ENCODE measurements at regions of chr10 and their contacts with region 1.

Region 1: DNA sequence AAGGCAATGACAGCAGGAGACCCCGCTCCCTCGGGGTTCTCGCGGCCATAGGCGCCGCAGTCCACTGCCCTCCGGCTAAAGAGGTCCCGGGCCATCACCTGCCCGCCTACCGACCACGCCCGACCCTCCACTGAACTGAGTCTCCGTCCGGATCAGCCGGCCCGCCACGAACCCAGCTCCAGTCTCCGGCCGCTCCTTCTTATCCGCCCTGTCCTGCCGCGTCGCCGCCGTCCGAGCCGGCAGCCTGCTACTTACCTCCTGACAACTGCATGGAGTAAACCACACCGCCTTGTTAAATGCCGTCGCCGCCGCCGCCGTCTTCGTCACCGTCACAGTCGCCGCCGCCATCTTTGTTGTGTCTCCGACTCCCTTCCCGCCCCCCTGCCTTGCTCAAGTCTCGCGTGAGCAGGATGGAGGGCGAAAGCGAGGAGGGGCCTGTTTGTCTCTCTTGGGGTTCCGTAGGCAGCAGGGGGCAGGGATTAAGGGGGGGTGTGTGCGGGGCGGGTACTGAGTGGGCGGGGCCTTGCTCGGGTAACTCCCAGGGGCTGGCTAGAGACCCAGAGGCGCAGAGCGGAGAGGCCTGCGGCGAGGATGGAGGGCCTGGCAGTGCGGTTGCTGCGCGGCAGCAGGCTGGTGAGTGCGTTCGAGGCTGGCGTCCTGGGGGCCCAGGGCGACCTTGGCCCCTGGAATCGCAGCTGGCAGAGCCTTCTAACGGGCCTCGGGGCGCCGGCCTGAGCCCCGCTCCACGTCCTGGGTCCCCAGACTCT is at the starts of genes ACADSB and IKZF5:
- DNase-seq: peak; percentile 98
- ATAC-seq: peak; percentile 91
- H3K4me3 Mint-ChIP-seq: peak within 1 kb of the TSS; percentile 99
- H3K27ac Mint-ChIP-seq: peak within 1 kb of the TSS; percentile 99
- H3K4me1 Mint-ChIP-seq: peaks cover 30% of the 10 kb centered on the region
- H3K27me3 Mint-ChIP-seq: no peaks in the 10 kb centered on the region
- total RNA-seq, gene ACADSB: 17.4 to 20.6 TPM
- total RNA-seq, gene IKZF5: 12.0 to 18.0 TPM

Region 2: GRCh38 chr10:122618461-122619165 is 390.0 kb before region 1 on chr10:
- CTCF ChIA-PET with region 1: no interaction called
- DNase-seq: no peak
- ATAC-seq: no peak
- H3K4me3 Mint-ChIP-seq: no peak overlapping the region
- H3K27ac Mint-ChIP-seq: no peak overlapping the region
- H3K4me1 Mint-ChIP-seq: no peaks in the 10 kb centered on the region
- H3K27me3 Mint-ChIP-seq: no peaks in the 10 kb centered on the region

Region 3: GRCh38 chr10:122980209-122981065 is 28.2 kb before region 1 on chr10 and contains the start of gene PSTK:
- CTCF ChIA-PET with region 1: interaction called, 43 read pairs
- DNase-seq: peak; percentile 94
- ATAC-seq: peak; percentile 97
- H3K4me3 Mint-ChIP-seq: peak within 1 kb of the TSS; percentile 86
- H3K27ac Mint-ChIP-seq: peak within 1 kb of the TSS; percentile 97
- H3K4me1 Mint-ChIP-seq: peaks cover 22% of the 10 kb centered on the region
- H3K27me3 Mint-ChIP-seq: peaks cover 7% of the 10 kb centered on the region
- total RNA-seq, gene PSTK: 2.8 to 4.5 TPM

Region 4: DNA sequence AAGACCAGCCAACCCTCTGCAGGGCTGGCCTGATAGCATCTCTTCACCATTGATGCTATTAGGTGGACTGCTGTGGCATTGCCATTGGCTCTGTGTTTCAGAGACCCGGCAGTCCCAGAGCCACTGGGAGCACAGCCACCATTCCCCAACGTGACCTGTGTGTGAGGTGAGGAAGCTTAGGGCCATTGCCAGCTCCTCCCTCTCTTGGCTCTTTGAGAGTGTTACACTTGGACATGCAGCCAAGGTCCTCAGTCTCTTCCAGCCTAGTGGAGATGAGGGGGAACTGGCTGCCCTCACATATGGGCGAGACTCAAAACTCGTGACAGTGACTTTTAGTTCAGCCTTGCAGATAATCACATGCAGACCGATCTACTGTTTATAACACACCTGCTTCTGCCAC is 87.8 kb after region 1 on chr10:
- CTCF ChIA-PET with region 1: no interaction called
- DNase-seq: no peak
- ATAC-seq: no peak
- H3K4me3 Mint-ChIP-seq: no peak overlapping the region
- H3K27ac Mint-ChIP-seq: no peak overlapping the region
- H3K4me1 Mint-ChIP-seq: no peaks in the 10 kb centered on the region
- H3K27me3 Mint-ChIP-seq: peaks cover 6% of the 10 kb centered on the region